Endothelial cell of umbilical vein (primary cell): ENCODE measurements at regions of chr2 and their contacts with region 1.

Region 1: GRCh38 chr2:231463698-231464575 is at the start of gene NCL:
- DNase-seq: peak; percentile 99
- H3K4me3 ChIP-seq: peak within 1 kb of the TSS; percentile 93 to 99 (median 96)
- H3K27ac ChIP-seq: peak within 1 kb of the TSS; percentile 79
- H3K4me1 ChIP-seq: peaks cover 20% of the 10 kb centered on the region
- H3K27me3 ChIP-seq: no peaks in the 10 kb centered on the region
- CTCF ChIP-seq: no peak
- POLR2A ChIP-seq: peak; percentile 99
- total RNA-seq, gene NCL: 701 and 708 TPM in 2 replicates

Region 2: DNA sequence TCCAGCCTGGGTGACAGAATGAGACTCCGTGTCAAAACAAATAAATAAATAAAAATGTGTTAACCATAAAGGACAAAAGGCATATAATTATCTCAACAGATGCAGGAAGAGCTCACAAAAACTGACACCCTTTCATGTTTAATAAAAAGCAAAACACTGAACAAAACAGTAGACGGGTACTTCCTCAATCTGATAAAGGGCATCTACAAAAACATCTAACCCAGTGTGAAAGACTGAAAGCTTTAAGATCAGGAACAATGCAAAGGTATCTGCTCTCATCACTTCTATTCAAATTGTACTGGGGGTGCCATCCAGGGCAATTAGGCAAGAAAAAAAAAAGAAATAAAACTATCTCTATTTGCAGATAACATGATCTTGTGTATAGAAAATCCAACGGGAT is 12.0 kb after region 1 on chr2:
- CTCF ChIA-PET with region 1: interaction called, 36 read pairs
- POLR2A ChIA-PET with region 1: interaction called, 42 read pairs
- dilution Hi-C with region 1: no loop called
- intact Hi-C with region 1: no loop called
- DNase-seq: no peak
- H3K4me3 ChIP-seq: no peak overlapping the region
- H3K27ac ChIP-seq: no peak overlapping the region
- H3K4me1 ChIP-seq: no peaks in the 10 kb centered on the region
- H3K27me3 ChIP-seq: no peaks in the 10 kb centered on the region
- CTCF ChIP-seq: no peak
- POLR2A ChIP-seq: no peak

Region 3: DNA sequence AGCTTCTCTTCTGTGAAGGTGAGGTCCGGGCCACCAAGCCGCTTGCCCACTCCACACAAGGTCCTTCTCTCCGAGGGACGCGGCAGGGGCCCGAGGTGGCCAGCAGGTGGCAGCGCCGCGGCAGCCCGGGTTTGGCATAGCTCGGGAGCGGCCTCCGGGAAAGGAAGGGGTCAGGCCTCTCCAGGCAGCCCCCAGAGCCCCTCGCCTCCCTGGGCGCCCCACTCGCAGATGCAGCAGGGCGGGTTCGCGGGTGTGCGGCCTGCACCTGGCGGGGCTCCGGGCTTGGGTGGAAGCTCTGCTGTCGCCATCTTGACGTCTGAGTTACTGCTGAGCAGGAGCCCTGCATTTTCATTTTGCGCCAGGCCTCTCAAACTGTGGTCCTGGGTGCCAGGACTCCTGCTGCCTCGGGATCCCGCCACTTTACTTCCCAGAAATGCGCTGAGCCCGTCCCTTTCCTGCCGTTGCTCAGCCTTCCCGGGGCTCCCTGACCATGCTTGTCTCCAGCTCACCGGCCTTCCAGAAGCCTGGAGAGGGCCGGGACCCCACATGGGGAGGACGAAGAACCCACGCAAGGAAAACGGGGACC is 19.0 kb after region 1 on chr2:
- CTCF ChIA-PET with region 1: interaction called, 36 read pairs
- POLR2A ChIA-PET with region 1: interaction called, 42 read pairs
- dilution Hi-C with region 1: no loop called
- intact Hi-C with region 1: loop called (anchors 2 kb)
- DNase-seq: peak; percentile 75
- H3K4me3 ChIP-seq: peak overlapping the region; percentile 9 to 46 (median 39)
- H3K27ac ChIP-seq: peak overlapping the region; percentile 50
- H3K4me1 ChIP-seq: peaks cover 9% of the 10 kb centered on the region
- H3K27me3 ChIP-seq: no peaks in the 10 kb centered on the region
- CTCF ChIP-seq: peak; percentile 95 to 98
- POLR2A ChIP-seq: no peak

Region 4: DNA sequence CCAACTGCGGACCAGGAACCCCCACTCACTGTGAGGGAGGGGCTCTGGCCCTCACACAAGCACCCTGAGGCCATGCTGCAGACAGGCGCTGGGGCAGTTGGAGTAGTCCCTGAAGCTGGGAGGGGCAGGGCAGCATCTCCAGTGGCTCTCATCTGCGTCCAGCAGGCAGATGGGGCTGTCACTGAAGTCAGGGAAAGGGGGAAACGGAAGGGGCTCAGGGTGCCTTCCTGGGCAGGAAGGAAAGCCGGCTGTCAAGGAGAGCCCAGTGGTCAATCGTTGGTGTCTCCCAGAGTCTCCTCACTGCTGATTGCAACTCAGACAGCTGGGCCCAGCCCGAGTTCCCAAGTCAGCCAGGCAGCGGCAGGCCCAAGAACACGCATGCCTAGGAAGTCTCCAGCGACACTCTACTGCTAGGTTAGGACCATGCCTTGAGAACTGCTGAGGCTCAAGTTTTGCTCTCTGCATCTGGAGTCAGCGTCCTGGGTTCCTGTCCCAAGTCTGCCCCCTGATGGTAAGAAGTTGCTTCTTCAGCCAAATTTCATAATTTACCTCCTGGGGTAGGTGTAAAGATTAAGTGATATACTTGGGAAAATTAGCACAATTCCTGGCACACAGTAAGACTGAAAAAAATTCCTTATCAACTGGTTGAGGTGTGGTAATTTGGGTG is 93.8 kb after region 1 on chr2:
- CTCF ChIA-PET with region 1: no interaction called
- POLR2A ChIA-PET with region 1: no interaction called
- dilution Hi-C with region 1: no loop called
- intact Hi-C with region 1: loop called (anchors 5 kb)
- DNase-seq: peak; percentile 74
- H3K4me3 ChIP-seq: no peak overlapping the region
- H3K27ac ChIP-seq: no peak overlapping the region
- H3K4me1 ChIP-seq: peaks cover 5% of the 10 kb centered on the region
- H3K27me3 ChIP-seq: no peaks in the 10 kb centered on the region
- CTCF ChIP-seq: peak; percentile 64 to 72
- POLR2A ChIP-seq: no peak

Region 5: GRCh38 chr2:231662028-231662810 is 198.3 kb after region 1 on chr2:
- CTCF ChIA-PET with region 1: no interaction called
- POLR2A ChIA-PET with region 1: no interaction called
- dilution Hi-C with region 1: no loop called
- intact Hi-C with region 1: loop called (anchors 5 kb)
- DNase-seq: peak; percentile 97
- H3K4me3 ChIP-seq: peak overlapping the region in 2 of 3 experiments; percentile 25 to 32
- H3K27ac ChIP-seq: peak overlapping the region; percentile 57
- H3K4me1 ChIP-seq: peaks cover 23% of the 10 kb centered on the region
- H3K27me3 ChIP-seq: no peaks in the 10 kb centered on the region
- CTCF ChIP-seq: no peak
- POLR2A ChIP-seq: peak; percentile 85